Motor neuron (in vitro differentiated cells): ENCODE measurements at regions of chr9 and their contacts with region 1.

Region 1: DNA sequence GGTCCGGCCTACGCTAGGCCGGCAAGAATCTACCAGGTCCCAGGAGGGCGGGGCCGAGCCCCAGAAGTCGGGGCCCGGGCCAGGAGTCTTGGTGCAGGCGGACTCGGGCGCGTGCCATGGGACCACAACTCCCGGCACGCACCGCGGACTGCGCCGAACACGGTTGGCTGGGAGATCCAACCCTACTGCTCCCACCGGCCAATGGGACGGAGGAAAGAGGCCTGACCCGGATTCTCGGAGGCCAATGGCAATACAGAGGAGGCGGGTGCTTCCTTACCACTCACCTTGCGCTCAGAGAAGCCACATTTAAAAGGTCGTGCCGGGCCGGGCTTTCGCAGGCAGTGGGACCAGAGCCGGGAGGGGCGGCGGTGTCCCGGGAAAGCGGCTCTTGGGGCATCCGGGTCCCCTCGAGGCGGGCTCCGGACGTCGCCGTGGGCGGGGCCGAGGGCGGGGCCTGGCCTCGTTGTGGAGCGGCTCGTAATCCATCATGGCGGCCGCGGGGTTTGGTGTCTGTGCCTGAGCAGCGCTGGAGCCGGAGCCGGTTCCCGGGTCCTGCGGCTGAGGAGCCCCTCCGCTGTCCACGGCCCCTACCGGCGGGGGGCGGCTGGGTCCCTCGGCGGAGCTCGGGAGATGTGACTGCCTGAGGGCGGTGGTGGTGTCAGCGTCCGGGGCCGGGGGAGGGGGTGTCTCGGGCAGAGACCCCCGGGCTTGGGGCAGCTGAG is 19.1 kb downstream of the EXOSC2 start:
- ATAC-seq: peak; percentile 95 to 98 (median 97)
- H3K4me3 ChIP-seq: peak overlapping the region; percentile 55 to 92 (median 85)
- H3K27ac ChIP-seq: peak overlapping the region; percentile 98
- H3K4me1 ChIP-seq: peaks cover 17 to 24% of the 10 kb centered on the region in 2 donors

Region 2: GRCh38 chr9:130834371-130835311 is 121.9 kb after region 1 on chr9 and contains the start of gene ABL1:
- in situ Hi-C with region 1: loop called in 2 of 9 experiments (anchors 25 kb)
- ATAC-seq: peak; percentile 66 to 89 (median 82)
- H3K4me3 ChIP-seq: peak within 1 kb of the TSS; percentile 60 to 86 (median 74)
- H3K27ac ChIP-seq: peak within 1 kb of the TSS; percentile 85 to 87
- H3K4me1 ChIP-seq: peaks cover 40 to 46% of the 10 kb centered on the region in 2 donors
- total RNA-seq, gene ABL1: 20.7 to 68.1 (median 33.2) TPM

Region 3: DNA sequence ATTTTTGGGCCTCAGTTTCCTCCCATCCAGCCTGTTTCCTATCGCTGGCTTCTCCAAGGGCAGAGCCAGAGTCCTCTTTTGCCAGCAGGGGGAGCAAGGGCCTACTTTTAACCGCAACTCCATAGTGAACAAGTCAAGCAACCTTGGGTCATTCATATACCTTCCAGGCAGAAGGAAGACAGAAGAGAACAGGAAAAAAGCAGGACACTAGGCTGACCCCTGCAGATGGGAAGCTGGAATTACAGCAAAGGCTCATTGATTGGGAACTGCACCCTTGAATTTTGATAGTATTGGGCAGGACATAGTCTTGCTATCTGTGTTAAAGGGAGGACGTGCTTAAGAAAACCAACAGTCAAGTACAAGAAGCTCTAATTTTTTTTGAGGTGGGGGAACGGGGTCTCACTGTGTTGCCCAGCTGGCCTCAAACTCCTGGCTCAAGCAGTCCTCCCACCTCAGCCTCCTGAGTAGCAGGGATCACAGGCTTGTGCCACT is 153.8 kb after region 1 on chr9:
- in situ Hi-C with region 1: loop called in 3 of 9 experiments (anchors 25 kb)
- ATAC-seq: peak; percentile 90 to 97 (median 94)
- H3K4me3 ChIP-seq: no peak overlapping the region
- H3K27ac ChIP-seq: peak overlapping the region in 1 of 2 donors; percentile 8
- H3K4me1 ChIP-seq: peaks cover 0 to 3% of the 10 kb centered on the region in 2 donors

Region 4: DNA sequence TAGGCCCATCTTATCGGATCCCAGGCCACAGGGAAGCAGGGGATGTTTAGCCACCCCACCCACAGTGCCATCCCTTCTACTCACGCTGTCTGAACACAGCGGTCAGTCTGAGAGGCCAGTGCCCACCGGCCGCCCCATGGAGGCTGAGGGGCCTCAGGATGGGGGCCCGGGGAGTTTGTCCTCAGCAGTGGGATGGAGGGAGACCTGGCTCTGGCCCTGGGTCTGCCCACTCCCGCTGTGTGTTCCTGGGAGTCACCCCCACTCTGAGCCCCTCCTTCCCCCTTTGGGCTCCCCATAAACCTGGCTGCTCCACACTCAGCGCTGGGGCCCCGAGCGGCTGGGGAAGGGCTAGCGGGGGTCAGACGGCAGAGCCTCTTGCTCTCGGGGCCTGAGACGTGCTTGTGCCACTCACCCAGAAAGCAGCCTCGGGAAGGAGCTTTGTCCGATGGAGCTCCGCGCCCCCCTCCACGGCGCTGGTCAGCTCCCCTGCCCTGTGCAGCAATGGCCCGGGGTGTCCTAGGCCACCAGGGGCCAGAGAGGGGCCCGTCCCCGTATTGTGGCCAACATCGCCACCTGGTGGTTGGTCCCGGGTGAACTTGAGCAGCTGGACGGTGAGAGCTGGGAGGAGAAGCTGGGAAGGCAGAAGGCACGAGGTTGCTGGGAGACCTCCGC is 285.3 kb after region 1 on chr9:
- in situ Hi-C with region 1: loop called in 3 of 9 experiments (anchors 25 kb)
- ATAC-seq: peak; percentile 80 to 95 (median 91)
- H3K4me3 ChIP-seq: no peak overlapping the region
- H3K27ac ChIP-seq: peak overlapping the region in 1 of 2 donors; percentile 5
- H3K4me1 ChIP-seq: peaks cover 4 to 11% of the 10 kb centered on the region in 2 donors

Region 5: GRCh38 chr9:131046581-131047202 is 334.0 kb after region 1 on chr9:
- in situ Hi-C with region 1: loop called in 1 of 9 experiments (anchors 25 kb)
- ATAC-seq: peak; percentile 84 to 99 (median 92)
- H3K4me3 ChIP-seq: no peak overlapping the region
- H3K27ac ChIP-seq: peak overlapping the region in 1 of 2 donors; percentile 38
- H3K4me1 ChIP-seq: no peaks in the 10 kb centered on the region